ENCODE measurements at regions of chr4 and their contacts with region 1.

Region 1: GRCh38 chr4:183471946-183472708 is 27.7 kb downstream of the CDKN2AIP start:
- DNase-seq: peak; percentile 36
- ATAC-seq: peak; percentile 86
- H3K4me3 ChIP-seq: no peak overlapping the region
- H3K27ac ChIP-seq: no peak overlapping the region
- H3K4me1 ChIP-seq: peaks cover 0 to 14% of the 10 kb centered on the region in 2 experiments; a peak in 1 of 4 replicates
- H3K27me3 ChIP-seq: no peaks in the 10 kb centered on the region
- CTCF ChIP-seq: peak; percentile 57 to 68 (median 60); a peak in 5 of 6 replicates
- POLR2A ChIP-seq: no peak
- RAD21 ChIP-seq: peak; percentile 74

Region 2: GRCh38 chr4:183571350-183571941 is 99.3 kb after region 1 on chr4:
- CTCF ChIA-PET with region 1: no interaction called
- POLR2A ChIA-PET with region 1: no interaction called
- RAD21 ChIA-PET with region 1: no interaction called
- intact Hi-C with region 1: no loop called
- DNase-seq: no peak
- ATAC-seq: no peak
- H3K4me3 ChIP-seq: no peak overlapping the region
- H3K27ac ChIP-seq: no peak overlapping the region
- H3K4me1 ChIP-seq: no peaks in the 10 kb centered on the region
- H3K27me3 ChIP-seq: no peaks in the 10 kb centered on the region
- CTCF ChIP-seq: no peak
- POLR2A ChIP-seq: no peak
- RAD21 ChIP-seq: no peak

Region 3: DNA sequence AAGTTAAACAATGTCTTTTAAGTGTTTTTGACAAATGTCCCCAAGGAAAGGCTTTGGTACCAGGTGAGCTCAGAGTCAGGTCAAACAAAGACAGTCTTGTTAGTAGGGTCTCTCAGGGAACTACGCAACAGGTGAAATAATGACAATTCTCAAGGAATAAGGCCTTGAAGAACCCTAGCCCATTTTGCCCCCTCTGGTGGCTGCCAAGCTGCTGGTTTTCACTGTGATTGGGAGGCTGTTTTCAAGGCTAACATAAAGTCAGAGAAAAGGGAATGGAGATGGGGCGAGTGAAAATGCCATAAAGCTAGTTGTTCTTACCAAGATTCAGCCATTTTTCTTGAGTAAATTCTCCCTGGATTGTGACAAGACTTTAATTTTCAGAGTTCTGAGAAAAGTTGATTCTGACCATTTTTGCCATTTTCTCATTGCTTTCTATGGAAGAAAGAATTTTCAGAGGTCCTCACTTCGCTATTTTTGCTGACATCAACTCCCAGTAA is 128.1 kb after region 1 on chr4:
- CTCF ChIA-PET with region 1: interaction called, 3 read pairs
- POLR2A ChIA-PET with region 1: no interaction called
- RAD21 ChIA-PET with region 1: no interaction called
- intact Hi-C with region 1: loop called (anchors 2 kb)
- DNase-seq: no peak
- ATAC-seq: 0 out of 2 replicates have a peak, but pooled peaks have one; percentile 36
- H3K4me3 ChIP-seq: no peak overlapping the region
- H3K27ac ChIP-seq: no peak overlapping the region
- H3K4me1 ChIP-seq: no peaks in the 10 kb centered on the region
- H3K27me3 ChIP-seq: no peaks in the 10 kb centered on the region
- CTCF ChIP-seq: peak; percentile 9 to 40 (median 29); a peak in 4 of 6 replicates
- POLR2A ChIP-seq: no peak
- RAD21 ChIP-seq: peak; percentile 24; the same call in 1 of the 2 replicates

Region 4: DNA sequence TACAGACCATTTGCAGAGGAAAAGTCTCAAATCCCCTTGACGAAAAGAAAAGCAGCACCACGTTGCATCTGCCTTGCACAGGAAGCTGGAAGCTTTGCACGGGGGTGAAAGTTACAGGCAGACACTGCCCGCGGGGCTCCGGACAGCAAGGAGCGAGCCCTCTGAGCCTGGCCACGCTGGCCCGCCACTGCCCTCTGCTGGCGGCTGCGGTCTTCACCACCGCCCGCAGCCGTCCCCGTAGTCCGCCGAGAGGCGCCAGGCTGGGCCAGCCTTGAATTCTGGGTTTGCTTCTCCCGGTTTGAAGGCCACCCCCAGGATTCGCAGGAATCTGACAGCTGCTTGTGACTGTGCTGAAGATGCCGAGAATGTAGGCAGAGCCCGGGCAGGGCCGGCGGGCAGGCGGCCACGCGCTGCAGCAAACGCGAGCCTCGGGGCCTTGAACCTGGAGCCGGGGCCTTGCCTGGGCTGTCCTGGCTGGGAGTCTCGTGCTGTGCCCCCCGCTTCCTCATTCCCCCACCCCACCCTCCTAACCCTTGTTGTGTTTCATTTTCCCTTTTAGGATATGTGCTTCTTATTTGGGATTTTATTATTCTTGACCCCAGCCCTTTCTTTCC is 696.4 kb after region 1 on chr4:
- CTCF ChIA-PET with region 1: no interaction called
- POLR2A ChIA-PET with region 1: no interaction called
- RAD21 ChIA-PET with region 1: no interaction called
- intact Hi-C with region 1: loop called (anchors 5 kb)
- DNase-seq: peak; percentile 22
- ATAC-seq: peak; percentile 97
- H3K4me3 ChIP-seq: no peak overlapping the region
- H3K27ac ChIP-seq: no peak overlapping the region
- H3K4me1 ChIP-seq: no peaks in the 10 kb centered on the region
- H3K27me3 ChIP-seq: no peaks in the 10 kb centered on the region
- CTCF ChIP-seq: peak; percentile 62 to 76 (median 66)
- POLR2A ChIP-seq: no peak
- RAD21 ChIP-seq: peak; percentile 71